PC-3 (cell line): ENCODE measurements at regions of chr3 and their contacts with region 1.

Region 1: GRCh38 chr3:17841190-17841828 is 98.9 kb upstream of the TBC1D5 start:
- DNase-seq: peak; percentile 83
- ATAC-seq: peak; percentile 93
- H3K4me3 ChIP-seq: no peak overlapping the region
- H3K27ac ChIP-seq: no peak overlapping the region
- H3K4me1 ChIP-seq: peaks cover 3% of the 10 kb centered on the region; the same call in 1 of the 2 replicates
- H3K27me3 ChIP-seq: no peaks in the 10 kb centered on the region
- CTCF ChIP-seq: peak; percentile 98

Region 2: GRCh38 chr3:17258823-17259436 is 582.4 kb before region 1 on chr3:
- CTCF ChIA-PET with region 1: no interaction called
- POLR2A ChIA-PET with region 1: no interaction called
- intact Hi-C with region 1: loop called (anchors 5 kb)
- DNase-seq: peak; percentile 71
- ATAC-seq: 0 out of 2 replicates have a peak, but pooled peaks have one; percentile 20
- H3K4me3 ChIP-seq: no peak overlapping the region
- H3K27ac ChIP-seq: no peak overlapping the region
- H3K4me1 ChIP-seq: no peaks in the 10 kb centered on the region
- H3K27me3 ChIP-seq: no peaks in the 10 kb centered on the region
- CTCF ChIP-seq: peak; percentile 86

Region 3: DNA sequence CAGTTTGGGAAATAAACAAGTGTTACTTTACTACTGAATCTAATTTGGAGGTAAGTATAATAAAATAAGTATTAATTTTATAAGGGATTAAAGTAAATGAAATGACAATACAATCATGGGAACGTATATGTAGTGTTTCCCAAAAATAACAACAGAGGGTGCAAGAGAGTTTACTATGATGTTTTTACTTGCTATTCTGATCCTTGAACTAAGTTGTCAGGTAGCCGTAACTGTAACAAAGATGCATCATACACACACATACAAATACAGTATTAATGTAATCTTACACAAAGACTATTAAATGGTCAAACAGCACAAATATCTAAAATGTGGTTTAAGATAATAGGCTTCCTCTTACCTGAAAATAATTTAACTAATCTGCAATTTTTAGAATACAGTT is 410.3 kb before region 1 on chr3:
- CTCF ChIA-PET with region 1: no interaction called
- POLR2A ChIA-PET with region 1: no interaction called
- intact Hi-C with region 1: loop called (anchors 1 kb)
- DNase-seq: peak; percentile 68
- ATAC-seq: peak; percentile 81
- H3K4me3 ChIP-seq: no peak overlapping the region
- H3K27ac ChIP-seq: no peak overlapping the region
- H3K4me1 ChIP-seq: peaks cover 12% of the 10 kb centered on the region
- H3K27me3 ChIP-seq: no peaks in the 10 kb centered on the region
- CTCF ChIP-seq: peak; percentile 62

Region 4: GRCh38 chr3:17544632-17545031 is 296.7 kb before region 1 on chr3:
- CTCF ChIA-PET with region 1: interaction called, 3 read pairs
- POLR2A ChIA-PET with region 1: no interaction called
- intact Hi-C with region 1: loop called (anchors 2 kb)
- DNase-seq: peak; percentile 17
- ATAC-seq: no peak
- H3K4me3 ChIP-seq: no peak overlapping the region
- H3K27ac ChIP-seq: no peak overlapping the region
- H3K4me1 ChIP-seq: no peaks in the 10 kb centered on the region
- H3K27me3 ChIP-seq: no peaks in the 10 kb centered on the region
- CTCF ChIP-seq: peak; percentile 59

Region 5: DNA sequence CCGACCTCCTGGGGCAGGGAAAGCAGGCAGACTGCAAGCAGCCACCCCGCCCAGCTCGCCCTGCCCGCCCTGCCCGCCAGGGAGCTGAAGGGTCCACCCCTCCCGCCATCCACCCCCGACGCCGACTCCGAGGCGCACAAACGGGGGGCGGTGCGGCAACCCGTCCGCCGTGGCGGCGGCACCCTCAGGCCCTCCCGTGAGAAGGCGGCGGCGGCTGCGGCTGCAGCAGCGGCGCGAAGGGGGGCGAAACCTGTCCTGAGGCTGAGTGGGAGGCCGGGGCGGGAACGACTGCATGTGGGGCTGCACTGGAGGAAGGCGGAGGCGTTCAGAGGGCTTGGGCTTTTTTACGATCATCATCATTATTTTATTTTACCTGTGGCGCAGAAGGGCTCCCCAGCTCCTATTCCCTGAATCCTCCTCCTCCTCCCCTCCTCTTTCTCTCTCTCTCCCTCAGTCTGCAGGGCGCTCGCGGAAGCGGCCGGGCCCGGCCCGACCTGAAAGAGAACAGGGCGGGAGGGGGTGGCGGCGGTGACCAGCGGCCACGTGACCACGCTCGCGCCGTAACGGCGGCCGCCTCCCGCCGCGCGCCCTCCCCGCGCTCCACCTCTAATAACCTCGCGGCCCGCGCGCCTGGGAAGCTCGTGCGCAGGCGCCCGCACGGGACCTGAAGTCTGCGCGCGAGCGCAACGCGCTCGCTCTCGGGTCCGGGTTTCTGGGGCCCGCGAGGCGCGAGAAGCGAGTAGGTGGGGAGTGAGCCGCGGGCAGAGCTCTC is 99.0 kb before region 1 on chr3 and contains the start of gene TBC1D5:
- CTCF ChIA-PET with region 1: interaction called, 4 read pairs
- POLR2A ChIA-PET with region 1: no interaction called
- intact Hi-C with region 1: loop called (anchors 2 kb)
- DNase-seq: peak; percentile 99
- ATAC-seq: peak; percentile 82
- H3K4me3 ChIP-seq: peak within 1 kb of the TSS; percentile 75
- H3K27ac ChIP-seq: peak within 1 kb of the TSS; percentile 79
- H3K4me1 ChIP-seq: peaks cover 24% of the 10 kb centered on the region
- H3K27me3 ChIP-seq: no peaks in the 10 kb centered on the region
- CTCF ChIP-seq: no peak
- total RNA-seq, gene TBC1D5: 54.4 and 54.5 TPM in 2 replicates

Region 6: GRCh38 chr3:17810759-17811158 is 30.6 kb before region 1 on chr3:
- CTCF ChIA-PET with region 1: interaction called, 14 read pairs
- POLR2A ChIA-PET with region 1: no interaction called
- intact Hi-C with region 1: no loop called
- DNase-seq: peak; percentile 83
- ATAC-seq: peak; percentile 62
- H3K4me3 ChIP-seq: no peak overlapping the region
- H3K27ac ChIP-seq: peak overlapping the region; percentile 50
- H3K4me1 ChIP-seq: peaks cover 40% of the 10 kb centered on the region
- H3K27me3 ChIP-seq: no peaks in the 10 kb centered on the region
- CTCF ChIP-seq: peak; percentile 68

Region 7: GRCh38 chr3:17985658-17986347 is 144.5 kb after region 1 on chr3:
- CTCF ChIA-PET with region 1: no interaction called
- POLR2A ChIA-PET with region 1: no interaction called
- intact Hi-C with region 1: no loop called
- DNase-seq: peak; percentile 40
- ATAC-seq: no peak; the same call in none of the 2 replicates
- H3K4me3 ChIP-seq: no peak overlapping the region
- H3K27ac ChIP-seq: no peak overlapping the region
- H3K4me1 ChIP-seq: peaks cover 7% of the 10 kb centered on the region; the same call in 1 of the 2 replicates
- H3K27me3 ChIP-seq: no peaks in the 10 kb centered on the region
- CTCF ChIP-seq: no peak